CD8-positive, alpha-beta memory T cell (primary cell): ENCODE measurements at regions of chr13 and their contacts with region 1.

Region 1: DNA sequence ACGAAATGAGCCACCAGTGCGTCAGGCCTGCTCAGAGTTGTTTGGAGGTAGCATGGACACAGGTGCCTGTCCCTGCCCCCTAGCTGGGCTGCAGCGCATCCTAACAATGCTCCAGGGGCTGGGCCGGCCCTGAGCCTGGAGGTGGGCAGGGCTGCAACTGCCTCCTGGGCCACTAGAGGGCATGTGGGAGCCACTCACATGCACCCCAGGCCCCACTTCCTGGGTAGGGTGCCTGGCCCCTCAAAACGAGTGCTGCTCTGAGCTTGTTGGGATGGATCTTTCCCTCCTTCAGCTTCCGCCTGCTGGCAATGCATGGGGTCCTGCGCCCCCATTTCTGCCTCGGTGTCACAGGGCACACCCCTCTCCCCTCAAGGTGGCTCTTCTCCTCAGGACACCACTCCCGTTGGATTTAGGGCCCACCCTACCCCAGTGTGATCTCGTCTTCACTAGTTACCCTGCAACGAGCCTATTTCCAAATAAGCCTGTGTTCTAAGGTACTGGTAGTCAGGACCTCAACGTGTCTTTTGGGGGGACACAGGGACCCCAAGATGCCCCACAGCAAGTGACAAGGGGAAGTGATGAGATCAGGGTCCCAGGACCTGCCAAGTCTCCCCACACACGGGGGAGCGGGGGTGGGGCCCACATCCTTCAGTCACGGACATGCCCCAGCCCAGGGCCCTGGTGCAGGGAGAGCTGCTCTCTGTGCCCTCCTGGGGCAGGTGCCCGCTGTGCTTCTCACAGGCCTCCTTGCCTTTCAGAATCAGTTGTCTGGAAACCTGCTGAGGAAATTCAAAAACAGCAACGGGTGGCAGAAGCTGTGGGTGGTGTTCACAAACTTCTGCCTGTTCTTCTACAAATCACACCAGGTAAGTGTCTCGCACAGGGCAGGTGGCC is 131.3 kb downstream of the STK24 start:
- DNase-seq: peak; percentile 66 to 82 (median 73)
- H3K4me3 ChIP-seq: no peak overlapping the region
- H3K4me3 Mint-ChIP-seq: peak overlapping the region; percentile 15 to 84 (median 73)
- H3K27ac ChIP-seq: no peak overlapping the region
- H3K27ac Mint-ChIP-seq: peak overlapping the region; percentile 74 to 91 (median 83)
- H3K4me1 ChIP-seq: peaks cover 11% of the 10 kb centered on the region
- H3K4me1 Mint-ChIP-seq: peaks cover 10 to 23% (median 13%) of the 10 kb centered on the region in 3 donors
- H3K27me3 ChIP-seq: no peaks in the 10 kb centered on the region
- H3K27me3 Mint-ChIP-seq: peaks cover 0 to 1% of the 10 kb centered on the region in 2 donors

Region 2: DNA sequence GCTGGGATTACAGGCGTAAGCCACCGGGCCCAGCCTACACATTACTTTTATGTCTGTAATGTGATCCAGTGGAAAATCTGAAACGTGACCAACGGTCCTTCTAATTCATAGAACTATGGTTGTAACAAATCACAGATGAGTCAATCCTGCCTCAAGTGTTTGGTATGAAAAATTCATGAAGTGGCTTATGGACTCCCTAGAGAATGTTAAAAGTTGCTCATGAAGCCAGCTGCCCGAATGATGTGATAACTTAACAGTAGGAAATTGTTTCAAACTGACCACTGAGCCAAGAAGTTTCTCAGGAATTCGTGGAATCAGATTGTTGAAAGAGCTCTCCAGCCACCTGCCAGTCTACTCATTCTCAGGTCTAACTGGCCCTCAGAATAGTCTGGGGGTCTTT is 362.1 kb before region 1 on chr13:
- CTCF ChIA-PET with region 1: no interaction called
- POLR2A ChIA-PET with region 1: no interaction called
- DNase-seq: no peak
- H3K4me3 ChIP-seq: no peak overlapping the region
- H3K4me3 Mint-ChIP-seq: no peak overlapping the region
- H3K27ac ChIP-seq: no peak overlapping the region
- H3K27ac Mint-ChIP-seq: no peak overlapping the region
- H3K4me1 ChIP-seq: no peaks in the 10 kb centered on the region
- H3K4me1 Mint-ChIP-seq: no peaks in the 10 kb centered on the region
- H3K27me3 ChIP-seq: no peaks in the 10 kb centered on the region
- H3K27me3 Mint-ChIP-seq: peaks cover 9 to 10% of the 10 kb centered on the region in 2 donors

Region 3: DNA sequence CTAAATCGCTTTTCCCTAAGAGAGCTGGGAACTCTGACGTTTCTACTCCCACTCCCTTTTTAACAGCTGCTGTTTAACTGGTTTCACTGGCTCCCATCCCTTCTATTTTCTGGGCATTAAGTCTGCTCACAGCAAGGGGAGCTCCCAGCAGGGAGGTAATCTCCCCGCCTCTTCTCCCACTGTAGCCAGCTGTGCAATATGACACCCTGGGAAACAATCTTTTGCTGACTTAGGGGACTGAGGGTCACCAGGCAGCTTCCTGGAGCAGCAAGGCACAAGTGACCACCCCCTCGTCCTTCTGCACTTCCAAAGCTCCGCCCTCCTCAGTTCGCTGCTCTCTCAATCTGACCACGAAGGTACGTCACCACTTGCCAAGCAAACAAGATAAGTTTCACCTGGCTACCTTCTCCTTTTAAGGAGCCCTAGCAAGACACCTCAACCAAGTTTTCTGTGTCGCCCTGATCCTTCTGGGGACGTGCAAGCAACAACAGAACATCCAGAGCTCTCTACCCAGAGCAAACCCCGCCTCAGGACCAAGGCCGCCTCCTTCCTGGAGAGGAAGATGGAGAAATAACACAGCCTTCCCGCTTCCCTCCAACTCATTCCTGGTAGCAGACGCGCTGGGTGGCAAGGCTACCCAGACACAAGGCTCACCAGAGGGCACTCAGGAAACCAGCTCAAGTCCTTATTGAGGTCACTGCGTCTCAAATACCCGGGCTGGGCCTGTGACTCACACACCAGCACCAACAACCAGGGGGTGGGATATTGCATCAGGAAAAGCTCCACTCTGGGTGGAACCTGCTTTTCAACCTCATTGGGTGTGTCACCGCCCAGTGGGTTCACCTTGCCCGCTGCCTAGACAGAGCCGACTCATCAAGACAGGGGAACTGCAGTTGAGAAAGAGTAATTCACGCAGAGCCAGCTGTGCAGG is 39.0 kb after region 1 on chr13:
- CTCF ChIA-PET with region 1: interaction called, 15 read pairs
- POLR2A ChIA-PET with region 1: no interaction called
- DNase-seq: peak in 4 of 5 donors; percentile 49 to 79 (median 66)
- H3K4me3 ChIP-seq: no peak overlapping the region
- H3K4me3 Mint-ChIP-seq: peak overlapping the region; percentile 61 to 87 (median 75)
- H3K27ac ChIP-seq: peak overlapping the region; percentile 8
- H3K27ac Mint-ChIP-seq: peak overlapping the region; percentile 92 to 100 (median 98)
- H3K4me1 ChIP-seq: peaks cover 45% of the 10 kb centered on the region
- H3K4me1 Mint-ChIP-seq: peaks cover 74 to 94% (median 83%) of the 10 kb centered on the region in 3 donors
- H3K27me3 ChIP-seq: no peaks in the 10 kb centered on the region
- H3K27me3 Mint-ChIP-seq: no peaks in the 10 kb centered on the region

Region 4: DNA sequence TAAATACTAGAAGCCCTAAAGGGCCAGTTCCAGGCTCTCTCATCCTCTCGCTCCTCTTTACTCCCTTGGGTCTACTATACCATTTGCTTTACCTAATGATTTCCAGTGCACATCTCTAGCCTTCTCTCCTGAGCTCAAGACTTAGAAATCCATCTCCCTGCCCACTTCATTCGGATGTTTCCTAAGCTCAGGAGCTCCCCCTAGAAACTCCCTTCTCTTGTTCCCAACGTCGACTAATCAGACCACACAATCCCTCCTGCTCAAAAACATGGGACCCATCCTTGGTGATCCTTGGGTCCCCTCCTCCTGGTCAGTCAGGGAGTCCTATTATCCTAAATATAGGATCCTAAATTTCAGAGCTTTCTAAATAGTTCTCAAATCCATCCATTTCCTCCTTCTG is 152.5 kb after region 1 on chr13:
- CTCF ChIA-PET with region 1: interaction called, 10 read pairs
- POLR2A ChIA-PET with region 1: no interaction called
- DNase-seq: no peak
- H3K4me3 ChIP-seq: no peak overlapping the region
- H3K4me3 Mint-ChIP-seq: no peak overlapping the region
- H3K27ac ChIP-seq: no peak overlapping the region
- H3K27ac Mint-ChIP-seq: peak overlapping the region in 1 of 8 donors; percentile 0
- H3K4me1 ChIP-seq: no peaks in the 10 kb centered on the region
- H3K4me1 Mint-ChIP-seq: no peaks in the 10 kb centered on the region
- H3K27me3 ChIP-seq: no peaks in the 10 kb centered on the region
- H3K27me3 Mint-ChIP-seq: peaks cover 2 to 4% of the 10 kb centered on the region in 2 donors

Region 5: DNA sequence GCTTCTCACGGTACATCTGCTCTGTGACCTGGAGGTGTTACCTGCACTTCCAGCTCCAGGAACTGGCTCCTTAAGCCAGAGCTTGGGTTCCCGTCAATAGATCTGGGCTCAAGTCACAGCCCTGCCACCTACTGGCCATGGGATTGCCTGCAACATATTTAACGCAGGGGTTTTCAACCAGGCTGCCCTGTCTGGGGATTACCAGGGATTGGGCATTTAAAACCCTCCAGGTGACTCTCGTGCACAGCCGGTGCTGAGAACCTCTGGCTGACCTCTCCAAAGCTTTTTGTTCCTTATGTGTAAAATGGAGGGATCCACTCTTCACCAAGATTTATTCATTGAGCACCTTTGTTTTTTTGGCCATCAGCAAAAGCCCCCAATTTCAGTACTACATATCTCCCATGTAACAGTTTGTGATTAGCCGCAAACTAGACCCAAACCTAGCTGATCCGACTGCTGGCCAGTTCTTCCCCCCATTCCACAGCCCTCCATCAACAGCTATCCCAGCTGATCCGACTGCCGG is 207.9 kb after region 1 on chr13:
- CTCF ChIA-PET with region 1: interaction called, 151 read pairs
- POLR2A ChIA-PET with region 1: interaction called, 8 read pairs
- DNase-seq: peak; percentile 49 to 76 (median 53)
- H3K4me3 ChIP-seq: no peak overlapping the region
- H3K4me3 Mint-ChIP-seq: peak overlapping the region in 6 of 7 donors; percentile 44 to 82 (median 68)
- H3K27ac ChIP-seq: no peak overlapping the region
- H3K27ac Mint-ChIP-seq: peak overlapping the region in 2 of 8 donors; percentile 27 to 61
- H3K4me1 ChIP-seq: no peaks in the 10 kb centered on the region
- H3K4me1 Mint-ChIP-seq: peaks cover 2 to 6% (median 5%) of the 10 kb centered on the region in 3 donors
- H3K27me3 ChIP-seq: no peaks in the 10 kb centered on the region
- H3K27me3 Mint-ChIP-seq: peaks cover 0 to 14% of the 10 kb centered on the region in 2 donors

Region 6: DNA sequence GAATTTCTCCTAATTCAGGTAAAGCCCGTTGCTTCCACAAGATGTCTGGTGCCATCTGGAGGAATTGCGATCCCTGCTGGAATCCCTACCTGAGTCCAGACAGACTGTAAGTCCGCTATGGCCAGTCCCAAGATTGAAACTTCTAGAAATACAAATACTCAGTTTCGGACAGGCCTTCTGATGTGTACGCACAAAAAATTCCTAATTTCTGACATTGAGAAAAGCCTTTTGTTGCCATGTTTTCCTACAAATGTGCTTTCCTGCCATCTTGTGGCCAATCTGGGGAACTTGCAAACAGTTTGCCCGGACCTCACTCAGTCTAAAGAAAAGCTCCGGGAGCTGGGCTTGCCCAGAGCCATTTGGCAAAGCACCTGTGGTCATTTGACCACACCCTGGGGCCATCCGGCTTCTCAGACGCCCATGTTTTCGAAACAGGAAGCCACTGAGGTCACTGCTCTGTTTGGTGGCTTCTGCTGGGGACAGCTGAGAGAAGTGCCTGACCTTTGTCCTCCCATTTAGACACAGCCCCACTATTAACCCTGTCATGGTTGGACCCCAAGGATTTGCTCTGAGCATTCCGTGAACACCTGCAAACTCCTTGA is 227.5 kb after region 1 on chr13:
- CTCF ChIA-PET with region 1: interaction called, 21 read pairs
- POLR2A ChIA-PET with region 1: no interaction called
- DNase-seq: peak in 4 of 5 donors; percentile 10 to 54 (median 32)
- H3K4me3 ChIP-seq: no peak overlapping the region
- H3K4me3 Mint-ChIP-seq: no peak overlapping the region
- H3K27ac ChIP-seq: no peak overlapping the region
- H3K27ac Mint-ChIP-seq: peak overlapping the region in 1 of 8 donors; percentile 61
- H3K4me1 ChIP-seq: peaks cover 3% of the 10 kb centered on the region
- H3K4me1 Mint-ChIP-seq: peaks cover 0 to 7% (median 4%) of the 10 kb centered on the region in 3 donors
- H3K27me3 ChIP-seq: no peaks in the 10 kb centered on the region
- H3K27me3 Mint-ChIP-seq: peaks cover 2 to 4% of the 10 kb centered on the region in 2 donors

Region 7: GRCh38 chr13:98775844-98776598 is 330.4 kb after region 1 on chr13:
- CTCF ChIA-PET with region 1: no interaction called
- POLR2A ChIA-PET with region 1: no interaction called
- DNase-seq: no peak
- H3K4me3 ChIP-seq: no peak overlapping the region
- H3K4me3 Mint-ChIP-seq: no peak overlapping the region
- H3K27ac ChIP-seq: no peak overlapping the region
- H3K27ac Mint-ChIP-seq: no peak overlapping the region
- H3K4me1 ChIP-seq: no peaks in the 10 kb centered on the region
- H3K4me1 Mint-ChIP-seq: no peaks in the 10 kb centered on the region
- H3K27me3 ChIP-seq: no peaks in the 10 kb centered on the region
- H3K27me3 Mint-ChIP-seq: peaks cover 6 to 25% of the 10 kb centered on the region in 2 donors